WTC11 (cell line): ENCODE measurements at regions of chr20 and their contacts with region 1.

Region 1: GRCh38 chr20:62616728-62617621 is 25.3 kb upstream of the SLCO4A1 start:
- DNase-seq: peak; percentile 81
- ATAC-seq: peak; percentile 87
- H3K4me3 Mint-ChIP-seq: no peak overlapping the region
- H3K27ac Mint-ChIP-seq: no peak overlapping the region
- H3K4me1 Mint-ChIP-seq: peaks cover 6% of the 10 kb centered on the region
- H3K27me3 Mint-ChIP-seq: no peaks in the 10 kb centered on the region; the same call in 1 of the 2 replicates
- CTCF ChIP-seq: peak; percentile 70

Region 2: GRCh38 chr20:62477669-62478455 is 139.1 kb before region 1 on chr20:
- CTCF ChIA-PET with region 1: interaction called, 16 read pairs
- POLR2A ChIA-PET with region 1: no interaction called
- DNase-seq: peak; percentile 58
- ATAC-seq: peak; percentile 46
- H3K4me3 Mint-ChIP-seq: peak overlapping the region; percentile 55
- H3K27ac Mint-ChIP-seq: no peak overlapping the region
- H3K4me1 Mint-ChIP-seq: peaks cover 21% of the 10 kb centered on the region
- H3K27me3 Mint-ChIP-seq: peaks cover 91% of the 10 kb centered on the region
- CTCF ChIP-seq: no peak

Region 3: DNA sequence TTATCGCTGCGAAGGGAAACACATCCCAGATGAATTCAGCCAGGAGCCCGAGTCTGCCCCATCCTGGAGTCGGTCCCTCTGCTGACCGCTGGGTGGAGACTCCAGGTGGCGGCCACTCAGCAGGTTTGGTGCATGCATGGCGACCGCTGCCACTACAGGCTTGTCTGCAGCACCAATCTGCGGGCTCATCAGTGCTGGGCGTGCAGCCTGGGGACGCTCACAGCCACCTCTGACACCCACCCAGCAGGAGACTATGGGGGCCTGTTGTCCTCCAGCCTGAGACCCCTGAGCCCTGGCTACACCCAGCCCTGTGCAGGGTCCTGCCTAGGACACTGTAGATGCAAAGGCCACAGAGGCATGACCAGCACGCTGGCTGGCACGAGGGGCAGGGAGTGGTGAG is 100.6 kb before region 1 on chr20:
- CTCF ChIA-PET with region 1: interaction called, 22 read pairs
- POLR2A ChIA-PET with region 1: no interaction called
- DNase-seq: peak; percentile 41
- ATAC-seq: peak; percentile 60; the same call in 1 of the 2 replicates
- H3K4me3 Mint-ChIP-seq: no peak overlapping the region
- H3K27ac Mint-ChIP-seq: no peak overlapping the region
- H3K4me1 Mint-ChIP-seq: no peaks in the 10 kb centered on the region; the same call in 1 of the 2 replicates
- H3K27me3 Mint-ChIP-seq: no peaks in the 10 kb centered on the region
- CTCF ChIP-seq: no peak

Region 4: DNA sequence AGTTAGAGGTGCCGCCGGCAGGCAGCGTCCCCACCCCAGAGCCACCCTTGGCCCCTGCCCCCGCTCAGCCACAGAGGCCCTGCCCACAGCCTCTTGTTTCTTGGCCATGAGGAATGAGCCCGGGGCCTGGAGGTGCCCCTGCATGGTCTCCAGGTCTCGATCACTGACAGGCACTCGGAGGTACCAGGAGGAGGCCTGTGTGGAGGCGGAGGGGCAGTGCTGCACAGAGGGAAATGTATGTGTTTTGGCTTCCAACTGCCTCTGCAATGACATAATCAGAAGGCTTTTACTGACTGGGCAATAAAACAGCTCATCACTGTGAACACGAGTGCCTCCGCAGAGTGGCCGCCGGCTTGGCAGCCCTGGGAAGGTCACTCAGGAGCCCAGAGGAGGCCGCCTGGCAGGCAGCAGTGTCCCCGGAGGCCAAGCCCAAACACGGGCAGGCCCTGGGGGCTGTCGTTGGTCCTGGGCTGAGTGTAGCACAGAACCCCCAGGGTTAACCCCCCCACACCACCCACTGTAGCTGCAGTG is 80.0 kb before region 1 on chr20:
- CTCF ChIA-PET with region 1: interaction called, 10 read pairs
- POLR2A ChIA-PET with region 1: no interaction called
- DNase-seq: no peak
- ATAC-seq: no peak
- H3K4me3 Mint-ChIP-seq: no peak overlapping the region
- H3K27ac Mint-ChIP-seq: no peak overlapping the region
- H3K4me1 Mint-ChIP-seq: no peaks in the 10 kb centered on the region
- H3K27me3 Mint-ChIP-seq: no peaks in the 10 kb centered on the region
- CTCF ChIP-seq: no peak

Region 5: GRCh38 chr20:62576815-62577506 is 40.0 kb before region 1 on chr20:
- CTCF ChIA-PET with region 1: interaction called, 22 read pairs
- POLR2A ChIA-PET with region 1: no interaction called
- DNase-seq: peak; percentile 46
- ATAC-seq: peak; percentile 57
- H3K4me3 Mint-ChIP-seq: no peak overlapping the region
- H3K27ac Mint-ChIP-seq: no peak overlapping the region
- H3K4me1 Mint-ChIP-seq: peaks cover 6% of the 10 kb centered on the region; the same call in 1 of the 2 replicates
- H3K27me3 Mint-ChIP-seq: peaks cover 2% of the 10 kb centered on the region
- CTCF ChIP-seq: no peak

Region 6: GRCh38 chr20:62606551-62607201 is 10.3 kb before region 1 on chr20:
- CTCF ChIA-PET with region 1: interaction called, 26 read pairs
- POLR2A ChIA-PET with region 1: no interaction called
- DNase-seq: peak; percentile 45
- ATAC-seq: peak; percentile 20; the same call in 1 of the 2 replicates
- H3K4me3 Mint-ChIP-seq: no peak overlapping the region
- H3K27ac Mint-ChIP-seq: peak overlapping the region; percentile 60
- H3K4me1 Mint-ChIP-seq: peaks cover 35% of the 10 kb centered on the region
- H3K27me3 Mint-ChIP-seq: peaks cover 4% of the 10 kb centered on the region; the same call in 1 of the 2 replicates
- CTCF ChIP-seq: no peak

Region 7: GRCh38 chr20:62685781-62686555 is 69.0 kb after region 1 on chr20:
- CTCF ChIA-PET with region 1: no interaction called
- POLR2A ChIA-PET with region 1: no interaction called
- DNase-seq: no peak
- ATAC-seq: no peak; the same call in none of the 2 replicates
- H3K4me3 Mint-ChIP-seq: no peak overlapping the region
- H3K27ac Mint-ChIP-seq: peak overlapping the region; percentile 50; the same call in 1 of the 2 replicates
- H3K4me1 Mint-ChIP-seq: peaks cover 6% of the 10 kb centered on the region; the same call in 1 of the 2 replicates
- H3K27me3 Mint-ChIP-seq: peaks cover under 1% of the 10 kb centered on the region; the same call in 1 of the 2 replicates
- CTCF ChIP-seq: no peak